ENCODE measurements at regions of chr9 and their contacts with region 1.

Region 1: DNA sequence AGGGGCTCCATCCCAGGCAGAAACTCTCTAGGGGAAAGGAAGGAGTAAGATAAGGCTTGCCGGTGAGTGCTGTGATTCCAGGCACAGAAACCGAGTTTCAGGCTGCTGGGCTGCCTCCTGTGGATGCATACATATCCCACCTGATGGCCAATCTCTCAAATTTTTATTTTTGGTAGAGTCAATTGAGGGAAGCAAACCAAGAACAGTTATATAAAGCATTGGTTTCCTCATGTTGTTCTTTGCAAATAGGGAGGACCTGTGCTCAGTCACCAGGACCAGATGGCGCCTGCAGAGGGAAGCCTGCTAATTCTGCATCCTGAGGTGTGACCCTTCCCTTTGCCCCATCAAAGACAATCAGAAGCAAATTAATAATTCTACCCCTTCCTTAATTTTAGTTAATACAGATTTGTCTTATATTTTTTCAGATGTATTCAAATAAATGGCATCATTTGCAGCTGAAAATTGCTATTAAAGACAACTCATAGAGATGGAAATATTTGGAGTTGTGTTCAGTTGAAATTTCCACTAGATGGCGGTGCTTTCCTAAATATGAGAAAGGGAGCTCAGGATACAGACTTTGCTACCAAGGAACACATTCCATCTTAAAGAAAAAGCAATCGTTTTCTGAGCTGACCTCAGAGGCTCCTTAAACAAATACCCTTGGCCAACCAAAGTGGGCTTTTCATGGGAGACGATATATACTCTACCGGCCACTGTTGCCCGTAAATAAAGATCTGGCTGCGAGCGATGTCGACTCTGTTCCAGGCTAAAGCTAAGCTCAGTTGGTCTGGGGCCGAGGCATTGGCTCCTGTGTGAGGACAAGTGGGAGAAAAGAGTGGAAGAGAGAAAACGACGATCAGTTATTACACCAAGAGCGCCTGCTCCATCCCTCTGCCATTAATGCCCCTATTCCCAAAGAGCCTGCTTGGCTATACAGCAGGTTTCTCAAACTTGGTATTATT is 225.7 kb upstream of the KLF9 start:
- DNase-seq: peak in 3 of 4 experiments; percentile 10 to 42 (median 12)
- ATAC-seq: peak; percentile 75
- H3K4me3 ChIP-seq: no peak overlapping the region
- H3K27ac ChIP-seq: no peak overlapping the region
- H3K4me1 ChIP-seq: no peaks in the 10 kb centered on the region
- H3K27me3 ChIP-seq: no peaks in the 10 kb centered on the region; a peak in 1 of 5 replicates
- CTCF ChIP-seq: peak; percentile 43 to 77 (median 55); a peak in 4 of 6 replicates
- EP300 ChIP-seq: no peak
- POLR2A ChIP-seq: no peak
- RAD21 ChIP-seq: peak; percentile 53 to 74

Region 2: DNA sequence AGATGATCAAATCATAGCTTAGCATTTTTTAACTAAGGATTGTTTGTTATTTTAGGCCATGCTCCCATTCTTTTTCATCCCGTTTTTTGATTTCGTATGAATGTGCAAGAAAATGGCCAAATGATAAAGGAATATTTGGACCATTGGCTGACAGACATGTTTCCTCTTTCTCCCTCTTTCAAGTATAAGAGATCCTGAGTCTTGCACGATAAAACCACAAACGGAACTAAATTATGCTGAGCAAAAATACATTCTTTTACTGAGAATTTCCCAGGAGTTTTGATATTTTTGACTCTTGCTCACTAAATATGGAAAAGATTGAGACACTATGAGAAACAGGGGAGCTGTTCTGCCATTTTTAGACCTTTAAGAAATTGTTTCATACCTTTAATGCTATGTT is 135.3 kb before region 1 on chr9:
- CTCF ChIA-PET with region 1: no interaction called
- POLR2A ChIA-PET with region 1: no interaction called
- in situ Hi-C with region 1: no loop called
- intact Hi-C with region 1: no loop called
- DNase-seq: no peak
- ATAC-seq: no peak
- H3K4me3 ChIP-seq: no peak overlapping the region
- H3K27ac ChIP-seq: no peak overlapping the region
- H3K4me1 ChIP-seq: peaks cover 0 to 8% of the 10 kb centered on the region in 2 experiments; a peak in 3 of 5 replicates
- H3K27me3 ChIP-seq: no peaks in the 10 kb centered on the region
- CTCF ChIP-seq: no peak
- EP300 ChIP-seq: no peak
- POLR2A ChIP-seq: no peak
- RAD21 ChIP-seq: no peak

Region 3: DNA sequence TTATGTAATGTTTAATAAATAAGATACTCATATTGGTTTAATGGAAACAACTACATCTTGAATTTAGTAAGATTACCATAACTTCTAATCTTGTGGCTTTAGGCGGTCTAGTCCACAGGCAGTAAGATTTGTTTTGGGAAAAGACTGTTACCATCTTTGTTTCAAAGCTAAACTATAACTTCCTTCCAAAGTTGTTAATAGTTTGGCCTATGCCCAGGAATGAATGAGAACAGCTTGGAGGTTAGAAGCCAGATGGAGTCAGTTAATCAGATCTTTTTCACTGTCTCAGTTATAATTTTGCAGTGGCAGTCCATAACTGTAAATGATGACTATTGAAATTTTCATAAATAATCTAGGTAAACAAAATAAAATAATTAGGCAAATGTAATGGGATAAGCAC is 16.1 kb after region 1 on chr9:
- CTCF ChIA-PET with region 1: no interaction called
- POLR2A ChIA-PET with region 1: no interaction called
- in situ Hi-C with region 1: no loop called
- intact Hi-C with region 1: no loop called
- DNase-seq: no peak
- ATAC-seq: no peak
- H3K4me3 ChIP-seq: no peak overlapping the region
- H3K27ac ChIP-seq: no peak overlapping the region
- H3K4me1 ChIP-seq: no peaks in the 10 kb centered on the region
- H3K27me3 ChIP-seq: no peaks in the 10 kb centered on the region
- CTCF ChIP-seq: no peak
- EP300 ChIP-seq: no peak
- POLR2A ChIP-seq: no peak
- RAD21 ChIP-seq: no peak

Region 4: DNA sequence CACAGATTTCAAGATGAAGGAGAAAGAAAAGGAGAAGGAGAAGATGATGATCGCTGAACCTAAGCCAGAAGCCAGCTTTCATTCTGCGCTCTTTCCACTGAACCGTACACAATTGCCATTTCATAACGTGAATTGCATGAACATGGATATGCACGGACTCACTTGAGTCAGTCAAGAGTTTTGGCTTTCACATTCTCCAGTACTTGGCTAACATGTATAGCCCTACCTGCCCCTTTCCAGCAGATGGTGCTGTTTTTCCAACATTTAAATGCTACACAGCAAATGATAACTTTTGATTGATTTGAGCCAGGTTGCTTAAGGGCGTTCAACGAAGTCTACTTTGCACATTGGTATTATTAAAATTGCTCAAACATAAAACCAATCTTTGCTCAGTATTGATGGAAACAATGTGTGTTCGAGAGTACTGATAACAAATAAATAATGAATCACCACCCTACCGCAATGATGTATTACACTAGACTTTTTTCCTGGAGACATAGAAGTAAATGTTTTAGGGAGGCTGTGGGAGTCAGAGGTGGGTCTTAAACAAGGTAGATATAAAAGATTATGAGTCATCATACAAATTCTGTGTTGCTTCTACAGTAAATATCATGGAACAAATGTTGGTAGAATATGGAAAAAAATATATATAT is 284.9 kb after region 1 on chr9:
- CTCF ChIA-PET with region 1: no interaction called
- POLR2A ChIA-PET with region 1: no interaction called
- in situ Hi-C with region 1: no loop called
- intact Hi-C with region 1: loop called (anchors 5 kb)
- DNase-seq: peak; percentile 7 to 37 (median 14)
- ATAC-seq: peak; percentile 79
- H3K4me3 ChIP-seq: no peak overlapping the region
- H3K27ac ChIP-seq: no peak overlapping the region
- H3K4me1 ChIP-seq: no peaks in the 10 kb centered on the region
- H3K27me3 ChIP-seq: no peaks in the 10 kb centered on the region
- CTCF ChIP-seq: peak; percentile 55 to 64 (median 57)
- EP300 ChIP-seq: no peak
- POLR2A ChIP-seq: no peak
- RAD21 ChIP-seq: peak; percentile 45 to 66

Region 5: DNA sequence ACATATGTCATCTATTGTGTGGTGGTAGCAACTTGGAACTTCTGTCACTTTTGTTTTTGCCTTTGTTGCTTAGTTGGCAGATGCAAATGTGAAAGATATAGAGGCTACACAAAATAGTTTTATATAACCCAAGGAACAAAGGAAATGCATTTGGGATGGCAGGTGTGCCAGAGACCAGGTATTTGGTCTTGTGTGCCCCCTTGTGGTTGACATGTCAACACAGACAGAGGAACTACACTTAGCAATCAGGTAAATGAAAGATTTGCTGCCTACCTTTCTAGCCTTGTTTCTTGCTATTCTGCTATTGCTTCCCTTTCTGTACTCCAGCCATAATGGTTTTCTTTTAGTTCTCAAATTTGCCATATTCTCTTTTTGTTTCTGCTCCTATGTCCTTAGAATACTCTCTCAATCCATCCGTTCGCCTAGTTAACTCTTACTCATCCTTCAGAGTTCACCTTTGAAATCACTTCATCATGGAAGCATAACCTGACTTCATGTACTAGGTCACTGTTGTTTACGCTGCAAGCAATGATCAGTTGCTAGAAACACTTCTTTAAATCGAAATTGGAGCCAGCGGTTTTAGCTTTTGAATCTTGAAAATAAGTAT is 361.7 kb after region 1 on chr9:
- CTCF ChIA-PET with region 1: interaction called, 6 read pairs
- POLR2A ChIA-PET with region 1: no interaction called
- in situ Hi-C with region 1: no loop called
- intact Hi-C with region 1: loop called (anchors 2 kb)
- DNase-seq: peak; percentile 4 to 15 (median 6)
- ATAC-seq: no peak
- H3K4me3 ChIP-seq: no peak overlapping the region
- H3K27ac ChIP-seq: no peak overlapping the region
- H3K4me1 ChIP-seq: no peaks in the 10 kb centered on the region
- H3K27me3 ChIP-seq: no peaks in the 10 kb centered on the region
- CTCF ChIP-seq: peak; percentile 28 to 46 (median 38); a peak in 4 of 6 replicates
- EP300 ChIP-seq: no peak
- POLR2A ChIP-seq: no peak
- RAD21 ChIP-seq: no peak

Region 6: GRCh38 chr9:71249729-71250317 is 609.7 kb after region 1 on chr9:
- CTCF ChIA-PET with region 1: interaction called, 9 read pairs
- POLR2A ChIA-PET with region 1: no interaction called
- in situ Hi-C with region 1: loop called (anchors 5 kb)
- intact Hi-C with region 1: loop called (anchors 2 kb)
- DNase-seq: peak; percentile 23 to 54 (median 36)
- ATAC-seq: peak; percentile 79
- H3K4me3 ChIP-seq: no peak overlapping the region
- H3K27ac ChIP-seq: no peak overlapping the region
- H3K4me1 ChIP-seq: no peaks in the 10 kb centered on the region
- H3K27me3 ChIP-seq: no peaks in the 10 kb centered on the region
- CTCF ChIP-seq: peak; percentile 66 to 98 (median 97)
- EP300 ChIP-seq: no peak
- POLR2A ChIP-seq: no peak
- RAD21 ChIP-seq: peak; percentile 54 to 70; a peak in 3 of 4 replicates